ENCODE measurements at regions of chr3 and their contacts with region 1.

Region 1: DNA sequence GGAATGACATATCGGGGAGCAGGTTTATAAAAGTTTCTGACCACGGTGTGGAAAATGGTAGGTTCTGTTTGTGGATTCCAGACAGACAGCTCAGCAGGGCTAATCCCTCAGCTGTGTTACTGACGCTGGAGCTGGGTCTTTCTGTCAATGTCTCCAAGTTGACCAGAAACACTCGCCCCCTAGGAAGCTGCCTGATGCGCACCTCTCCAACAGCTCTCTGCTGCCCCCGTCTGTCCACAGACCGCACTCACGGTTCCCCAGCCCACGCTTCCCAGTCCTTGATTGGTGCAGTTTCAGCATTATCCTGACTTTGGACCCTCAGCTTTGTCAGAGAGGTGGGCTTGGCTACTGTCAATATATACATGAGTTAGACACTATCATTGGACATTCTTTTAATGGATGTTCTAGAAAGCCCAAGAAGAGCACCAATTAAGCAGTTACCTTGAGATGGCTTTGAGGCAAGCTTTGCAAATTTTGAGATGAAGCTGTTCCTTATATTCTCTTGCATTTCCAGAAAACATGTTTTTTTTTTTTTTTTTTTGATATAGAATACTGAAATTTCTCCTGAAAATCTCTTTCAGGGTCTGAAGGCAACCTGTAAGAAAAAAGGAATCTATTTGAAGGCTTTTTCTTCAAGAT is 98.9 kb upstream of the TBC1D5 start:
- DNase-seq: peak; percentile 24
- ATAC-seq: peak; percentile 99
- H3K4me3 ChIP-seq: no peak overlapping the region
- H3K27ac ChIP-seq: no peak overlapping the region
- H3K4me1 ChIP-seq: no peaks in the 10 kb centered on the region
- H3K27me3 ChIP-seq: no peaks in the 10 kb centered on the region
- CTCF ChIP-seq: peak; percentile 96 to 97 (median 97)
- EP300 ChIP-seq: no peak
- POLR2A ChIP-seq: no peak
- RAD21 ChIP-seq: peak; percentile 98

Region 2: DNA sequence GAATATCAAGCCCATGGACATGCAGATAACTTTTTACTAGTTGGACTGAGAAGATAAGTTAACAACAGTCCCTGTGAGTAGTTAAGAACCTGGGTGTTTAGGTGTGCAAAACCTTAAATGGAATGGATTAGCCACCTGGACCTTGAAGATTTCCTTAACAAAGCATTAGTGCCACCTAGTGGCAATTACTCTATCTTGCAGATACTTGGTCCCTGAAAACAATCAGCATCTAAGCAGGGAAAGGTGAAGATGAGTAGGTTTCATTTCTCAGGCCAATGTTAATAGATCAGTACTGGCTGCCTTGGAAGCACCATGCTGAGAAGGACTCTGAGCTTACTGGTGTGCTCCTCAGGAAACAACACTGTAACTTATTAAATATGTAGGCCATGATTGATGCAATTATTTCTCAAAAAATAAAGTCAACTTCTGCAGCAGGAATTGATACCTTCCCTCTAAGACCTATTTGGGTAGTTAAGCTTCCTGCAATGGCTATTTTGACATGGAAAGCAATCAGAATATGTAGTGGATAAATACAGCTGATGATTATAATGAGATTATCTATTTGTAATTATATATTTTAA is 428.3 kb before region 1 on chr3:
- CTCF ChIA-PET with region 1: interaction called, 35 read pairs
- POLR2A ChIA-PET with region 1: no interaction called
- RAD21 ChIA-PET with region 1: interaction called, 16 read pairs
- SMC1A ChIA-PET with region 1: interaction called, 6 read pairs
- in situ Hi-C with region 1: no loop called
- intact Hi-C with region 1: no loop called
- DNase-seq: peak; percentile 41
- ATAC-seq: peak; percentile 98
- H3K4me3 ChIP-seq: no peak overlapping the region
- H3K27ac ChIP-seq: no peak overlapping the region
- H3K4me1 ChIP-seq: no peaks in the 10 kb centered on the region
- H3K27me3 ChIP-seq: no peaks in the 10 kb centered on the region
- CTCF ChIP-seq: peak; percentile 70 to 80 (median 70)
- EP300 ChIP-seq: no peak
- POLR2A ChIP-seq: no peak
- RAD21 ChIP-seq: peak; percentile 93

Region 3: DNA sequence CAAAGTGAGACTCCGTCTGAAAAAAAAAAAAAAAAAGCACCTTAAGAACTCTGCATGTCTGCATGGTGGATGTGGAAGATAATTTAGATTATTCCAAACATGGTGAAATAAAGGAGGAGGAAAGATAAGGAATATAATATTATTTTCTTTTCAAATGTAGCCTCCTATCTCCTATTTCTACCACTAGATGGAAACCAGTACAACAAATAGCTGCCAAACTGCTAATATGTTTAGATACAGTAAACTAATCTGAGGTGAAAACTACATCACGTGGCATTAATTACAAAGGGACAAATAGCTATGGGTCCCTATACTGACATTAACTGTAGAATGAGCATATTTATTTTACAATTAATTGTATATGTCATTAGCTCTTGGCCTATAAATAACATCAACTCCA is 296.7 kb before region 1 on chr3:
- CTCF ChIA-PET with region 1: interaction called, 14 read pairs
- POLR2A ChIA-PET with region 1: no interaction called
- RAD21 ChIA-PET with region 1: interaction called, 6 read pairs
- SMC1A ChIA-PET with region 1: interaction called, 13 read pairs
- in situ Hi-C with region 1: no loop called
- intact Hi-C with region 1: no loop called
- DNase-seq: no peak
- ATAC-seq: no peak
- H3K4me3 ChIP-seq: no peak overlapping the region
- H3K27ac ChIP-seq: no peak overlapping the region
- H3K4me1 ChIP-seq: no peaks in the 10 kb centered on the region
- H3K27me3 ChIP-seq: no peaks in the 10 kb centered on the region
- CTCF ChIP-seq: no peak; a peak in 1 of 6 replicates
- EP300 ChIP-seq: no peak
- POLR2A ChIP-seq: no peak
- RAD21 ChIP-seq: 0 out of 2 replicates have a peak, but pooled peaks have one; percentile 16

Region 4: DNA sequence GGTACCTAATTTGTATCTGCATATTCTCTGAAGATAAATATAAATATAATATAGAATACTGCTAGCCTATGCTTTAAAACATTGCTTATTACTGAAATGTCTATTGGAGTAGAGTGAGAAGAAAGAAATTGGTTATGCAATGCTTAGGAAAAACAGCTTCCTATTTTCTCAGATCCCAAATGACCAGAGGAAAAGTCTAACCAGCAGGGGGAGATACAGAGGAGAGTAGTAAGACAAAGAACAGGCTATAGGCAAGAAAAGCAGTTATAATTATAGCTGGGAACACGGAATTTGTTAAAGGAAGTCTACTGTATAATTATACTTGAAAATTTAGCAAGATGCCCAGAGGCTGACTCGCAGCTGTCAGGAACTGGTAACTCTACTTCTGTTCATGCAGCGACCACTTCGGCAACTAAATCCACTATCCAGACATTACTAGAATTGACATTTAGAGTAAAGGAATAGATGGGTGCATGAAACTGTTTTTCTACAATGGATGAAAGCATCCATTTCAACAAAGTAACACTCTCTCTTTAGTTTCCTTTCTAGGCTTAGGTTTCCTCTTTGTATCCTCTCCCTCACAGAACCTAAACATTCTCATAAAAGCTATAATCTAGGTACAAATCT is 196.1 kb before region 1 on chr3:
- CTCF ChIA-PET with region 1: interaction called, 120 read pairs
- POLR2A ChIA-PET with region 1: no interaction called
- RAD21 ChIA-PET with region 1: interaction called, 44 read pairs
- SMC1A ChIA-PET with region 1: interaction called, 61 read pairs
- in situ Hi-C with region 1: no loop called
- intact Hi-C with region 1: loop called (anchors 1 kb)
- DNase-seq: no peak
- ATAC-seq: peak; percentile 65
- H3K4me3 ChIP-seq: no peak overlapping the region
- H3K27ac ChIP-seq: no peak overlapping the region
- H3K4me1 ChIP-seq: no peaks in the 10 kb centered on the region
- H3K27me3 ChIP-seq: no peaks in the 10 kb centered on the region
- CTCF ChIP-seq: peak; percentile 45 to 54 (median 53); a peak in 5 of 6 replicates
- EP300 ChIP-seq: no peak
- POLR2A ChIP-seq: no peak
- RAD21 ChIP-seq: peak; percentile 59

Region 5: GRCh38 chr3:17810759-17811158 is 30.6 kb before region 1 on chr3:
- CTCF ChIA-PET with region 1: interaction called, 10 read pairs
- POLR2A ChIA-PET with region 1: no interaction called
- RAD21 ChIA-PET with region 1: interaction called, 5 read pairs
- SMC1A ChIA-PET with region 1: interaction called, 4 read pairs
- in situ Hi-C with region 1: no loop called
- intact Hi-C with region 1: no loop called
- DNase-seq: no peak
- ATAC-seq: no peak; the same call in 2 of the 3 replicates
- H3K4me3 ChIP-seq: no peak overlapping the region
- H3K27ac ChIP-seq: no peak overlapping the region
- H3K4me1 ChIP-seq: no peaks in the 10 kb centered on the region
- H3K27me3 ChIP-seq: no peaks in the 10 kb centered on the region
- CTCF ChIP-seq: peak; percentile 19 to 34 (median 19); a peak in 3 of 6 replicates
- EP300 ChIP-seq: no peak
- POLR2A ChIP-seq: no peak
- RAD21 ChIP-seq: peak; percentile 32; the same call in 1 of the 2 replicates

Region 6: DNA sequence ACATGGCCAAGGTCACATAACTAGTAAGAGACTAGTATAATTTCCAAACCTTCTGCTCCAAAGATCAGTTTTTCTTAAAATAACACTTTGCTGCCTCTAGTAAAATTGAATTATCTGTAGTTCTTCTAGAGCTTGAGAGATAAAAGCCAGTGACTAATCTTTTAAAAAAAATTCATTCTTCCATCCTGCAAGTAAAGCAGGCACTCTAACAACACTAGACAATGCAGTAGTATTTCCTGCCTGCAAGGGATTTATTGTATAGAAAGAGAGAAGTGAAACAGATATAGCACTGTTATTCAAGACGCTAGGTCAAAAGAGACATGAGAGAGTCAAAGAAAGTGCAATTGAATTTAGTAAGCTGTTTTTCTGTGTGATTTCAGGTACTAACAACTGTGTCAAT is 60.6 kb after region 1 on chr3:
- CTCF ChIA-PET with region 1: no interaction called
- POLR2A ChIA-PET with region 1: no interaction called
- RAD21 ChIA-PET with region 1: no interaction called
- SMC1A ChIA-PET with region 1: no interaction called
- in situ Hi-C with region 1: no loop called
- intact Hi-C with region 1: no loop called
- DNase-seq: no peak
- ATAC-seq: peak; percentile 86
- H3K4me3 ChIP-seq: no peak overlapping the region
- H3K27ac ChIP-seq: no peak overlapping the region
- H3K4me1 ChIP-seq: peaks cover 2% of the 10 kb centered on the region
- H3K27me3 ChIP-seq: no peaks in the 10 kb centered on the region
- CTCF ChIP-seq: no peak
- EP300 ChIP-seq: no peak
- POLR2A ChIP-seq: no peak
- RAD21 ChIP-seq: no peak